Activated CD4-positive, alpha-beta T cell treated with anti-CD3 and anti-CD28 coated beads, Interleukin-2, amount 10 ng/mL, durations not matched to agents 24 days and 14 days (primary cell): ENCODE measurements at regions of chr4 and their contacts with region 1.

Region 1: DNA sequence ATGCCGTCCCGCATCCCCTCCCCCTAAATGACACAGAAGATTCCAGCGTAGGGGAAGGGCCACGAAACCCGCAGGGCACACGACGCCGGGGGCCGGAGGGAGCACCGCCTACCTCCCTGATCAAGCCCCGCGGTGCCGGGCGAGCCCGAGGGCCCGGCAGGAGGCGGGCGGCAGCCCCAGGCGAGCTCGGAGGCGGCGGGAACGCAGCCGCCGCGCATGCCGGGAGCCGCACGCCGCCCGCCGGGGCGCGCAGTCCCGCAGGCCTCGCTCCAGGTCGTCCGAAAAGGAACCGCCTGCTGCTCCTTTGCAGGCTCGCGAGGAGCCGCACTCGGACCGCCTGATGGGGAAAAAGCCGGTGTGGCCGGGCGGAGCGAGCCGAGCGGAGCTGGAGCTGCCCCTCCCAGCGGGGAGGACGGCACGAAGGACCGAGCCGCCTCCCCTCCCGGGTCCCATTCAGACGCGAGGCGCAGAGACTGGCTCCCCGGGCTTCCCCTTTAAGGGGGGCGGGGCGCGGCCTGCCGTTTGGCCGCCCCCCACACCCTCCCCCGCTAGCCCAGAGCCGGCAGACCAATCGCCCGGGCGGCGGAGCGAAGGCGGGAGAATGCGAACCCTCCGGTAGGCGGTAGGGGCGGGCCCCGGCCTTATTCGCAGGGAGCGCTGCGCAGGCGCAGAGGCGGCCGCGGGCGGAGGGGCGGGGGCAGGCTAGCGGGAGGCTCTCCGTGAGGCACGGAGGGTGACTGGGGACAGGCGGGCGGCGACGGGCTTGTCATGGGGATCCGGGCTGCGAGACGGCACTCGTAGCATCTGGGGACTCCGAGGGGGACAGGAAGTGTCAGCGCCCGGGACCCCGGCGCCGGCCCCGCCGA is 561 bp upstream of the ING2 start:
- DNase-seq: peak; percentile 100
- H3K4me3 Mint-ChIP-seq: peak overlapping the region; percentile 90
- H3K27ac Mint-ChIP-seq: peak overlapping the region; percentile 95
- H3K4me1 Mint-ChIP-seq: peaks cover 25% of the 10 kb centered on the region
- H3K27me3 Mint-ChIP-seq: no peaks in the 10 kb centered on the region

Region 2: DNA sequence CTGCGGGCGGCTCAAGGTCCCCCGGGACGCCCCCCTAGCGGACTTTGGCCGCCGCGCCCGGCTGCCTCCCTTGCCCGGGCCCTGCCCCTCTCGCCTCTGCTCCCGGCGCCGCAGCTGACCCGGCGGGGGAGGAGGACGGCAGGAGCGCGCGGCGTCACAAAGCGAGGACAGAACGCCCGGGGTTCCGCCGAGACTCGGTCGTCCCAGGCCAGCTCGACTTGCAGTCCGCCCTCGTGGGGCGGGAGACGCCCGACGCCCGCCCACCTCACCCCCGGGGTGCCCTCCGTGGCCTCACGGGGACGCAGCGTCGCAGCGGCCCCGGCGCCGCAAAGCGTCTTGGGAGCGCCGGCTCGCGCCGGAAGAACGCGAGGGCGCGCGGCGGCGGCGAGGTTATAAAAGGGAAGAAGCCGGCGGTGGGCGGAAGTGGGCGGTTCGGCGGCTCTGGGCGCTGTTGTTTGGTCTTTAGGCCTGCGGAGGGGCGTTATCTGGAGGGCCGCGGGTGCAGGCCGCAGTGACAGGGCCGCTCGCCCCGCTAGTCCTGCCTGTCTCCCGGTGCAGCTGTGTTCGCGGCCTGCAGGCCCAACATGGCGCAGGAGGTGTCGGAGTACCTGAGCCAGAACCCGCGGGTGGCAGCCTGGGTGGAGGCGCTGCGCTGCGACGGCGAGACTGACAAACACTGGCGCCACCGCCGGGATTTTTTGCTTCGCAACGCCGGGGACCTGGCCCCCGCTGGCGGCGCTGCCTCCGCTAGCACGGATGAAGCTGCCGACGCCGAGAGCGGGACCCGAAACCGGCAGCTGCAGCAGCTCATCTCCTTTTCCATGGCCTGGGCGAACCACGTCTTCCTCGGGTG is 59.9 kb before region 1 on chr4 and contains the start of gene CDKN2AIP:
- intact Hi-C with region 1: loop called (anchors 1 kb)
- DNase-seq: peak; percentile 98
- H3K4me3 Mint-ChIP-seq: peak within 1 kb of the TSS; percentile 96
- H3K27ac Mint-ChIP-seq: peak within 1 kb of the TSS; percentile 95
- H3K4me1 Mint-ChIP-seq: peaks cover 35% of the 10 kb centered on the region
- H3K27me3 Mint-ChIP-seq: no peaks in the 10 kb centered on the region
- total RNA-seq, gene CDKN2AIP: 22.7 and 23.1 TPM in 2 replicates

Region 3: DNA sequence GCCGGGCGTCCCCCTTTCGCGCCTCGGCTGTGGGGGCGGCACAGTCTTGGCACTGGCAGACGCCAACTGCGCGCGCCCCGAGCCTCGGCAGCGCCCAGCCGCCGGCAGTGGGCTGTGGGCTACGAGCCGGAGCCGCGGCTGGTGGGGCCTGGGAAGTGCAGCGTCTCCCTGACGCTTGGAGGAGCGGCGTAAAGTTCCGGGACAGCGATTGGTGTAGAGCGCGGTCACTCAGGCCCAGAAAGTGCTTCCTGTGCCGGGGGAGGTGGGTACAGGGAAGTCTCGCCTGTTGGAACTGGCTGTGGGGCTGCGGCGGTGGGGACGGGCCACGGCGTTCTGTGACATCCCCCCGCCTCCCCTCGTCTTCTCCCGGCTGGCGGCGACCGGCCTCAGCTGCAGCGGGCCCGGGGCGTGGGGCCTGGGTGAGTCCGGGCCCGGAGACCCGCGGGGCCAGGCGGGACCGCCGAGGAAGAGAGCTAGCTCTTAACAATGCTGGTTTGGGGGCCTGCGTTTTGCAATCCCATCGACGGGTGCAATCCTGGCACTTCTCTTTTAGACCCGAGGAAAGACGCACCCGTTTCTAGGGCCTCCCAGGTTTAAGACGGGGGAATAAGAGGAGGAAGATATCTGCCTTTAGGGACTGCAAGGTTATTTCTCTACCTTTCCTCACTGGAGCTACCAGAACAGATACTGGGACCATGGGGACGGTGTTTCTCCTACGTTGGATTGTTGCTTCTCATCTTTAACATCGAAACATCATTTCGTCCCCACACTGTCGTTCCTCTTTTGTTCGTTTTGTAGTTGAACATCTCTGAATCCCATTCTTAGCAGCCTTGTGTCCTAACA is 155.0 kb after region 1 on chr4 and contains the starts of genes RWDD4 and TRAPPC11:
- intact Hi-C with region 1: loop called (anchors 1 kb)
- DNase-seq: peak; percentile 98
- H3K4me3 Mint-ChIP-seq: peak within 1 kb of the TSS; percentile 82
- H3K27ac Mint-ChIP-seq: peak within 1 kb of the TSS; percentile 96
- H3K4me1 Mint-ChIP-seq: peaks cover 30% of the 10 kb centered on the region
- H3K27me3 Mint-ChIP-seq: no peaks in the 10 kb centered on the region
- total RNA-seq, gene RWDD4: 27.3 and 31.5 TPM in 2 replicates
- total RNA-seq, gene TRAPPC11: 26.3 and 33.4 TPM in 2 replicates

Region 4: GRCh38 chr4:184310171-184310567 is 805.9 kb after region 1 on chr4:
- intact Hi-C with region 1: loop called (anchors 10 kb)
- DNase-seq: peak; percentile 78
- H3K4me3 Mint-ChIP-seq: peak overlapping the region; percentile 16
- H3K27ac Mint-ChIP-seq: peak overlapping the region; percentile 66
- H3K4me1 Mint-ChIP-seq: peaks cover 65% of the 10 kb centered on the region
- H3K27me3 Mint-ChIP-seq: no peaks in the 10 kb centered on the region

Region 5: GRCh38 chr4:184538023-184538599 is 1033.8 kb after region 1 on chr4:
- intact Hi-C with region 1: loop called (anchors 10 kb)
- DNase-seq: peak; percentile 89
- H3K4me3 Mint-ChIP-seq: peak overlapping the region; percentile 90
- H3K27ac Mint-ChIP-seq: peak overlapping the region; percentile 92
- H3K4me1 Mint-ChIP-seq: peaks cover 33% of the 10 kb centered on the region
- H3K27me3 Mint-ChIP-seq: no peaks in the 10 kb centered on the region

Region 6: GRCh38 chr4:184733654-184734524 is 1229.6 kb after region 1 on chr4 and contains the start of gene CENPU:
- intact Hi-C with region 1: loop called (anchors 1 kb)
- DNase-seq: peak; percentile 99
- H3K4me3 Mint-ChIP-seq: peak within 1 kb of the TSS; percentile 96
- H3K27ac Mint-ChIP-seq: peak within 1 kb of the TSS; percentile 93
- H3K4me1 Mint-ChIP-seq: peaks cover 41% of the 10 kb centered on the region
- H3K27me3 Mint-ChIP-seq: no peaks in the 10 kb centered on the region
- total RNA-seq, gene CENPU: 71.7 and 75.5 TPM in 2 replicates

Region 7: GRCh38 chr4:185425647-185426352 is 1921.5 kb after region 1 on chr4 and contains the start of gene UFSP2:
- intact Hi-C with region 1: loop called (anchors 1 kb)
- DNase-seq: peak; percentile 97
- H3K4me3 Mint-ChIP-seq: peak within 1 kb of the TSS; percentile 87
- H3K27ac Mint-ChIP-seq: peak within 1 kb of the TSS; percentile 98
- H3K4me1 Mint-ChIP-seq: peaks cover 24% of the 10 kb centered on the region
- H3K27me3 Mint-ChIP-seq: peaks cover 14% of the 10 kb centered on the region
- total RNA-seq, gene UFSP2: 24.8 and 25.7 TPM in 2 replicates